ENCODE measurements at regions of chr9 and their contacts with region 1.

Region 1: DNA sequence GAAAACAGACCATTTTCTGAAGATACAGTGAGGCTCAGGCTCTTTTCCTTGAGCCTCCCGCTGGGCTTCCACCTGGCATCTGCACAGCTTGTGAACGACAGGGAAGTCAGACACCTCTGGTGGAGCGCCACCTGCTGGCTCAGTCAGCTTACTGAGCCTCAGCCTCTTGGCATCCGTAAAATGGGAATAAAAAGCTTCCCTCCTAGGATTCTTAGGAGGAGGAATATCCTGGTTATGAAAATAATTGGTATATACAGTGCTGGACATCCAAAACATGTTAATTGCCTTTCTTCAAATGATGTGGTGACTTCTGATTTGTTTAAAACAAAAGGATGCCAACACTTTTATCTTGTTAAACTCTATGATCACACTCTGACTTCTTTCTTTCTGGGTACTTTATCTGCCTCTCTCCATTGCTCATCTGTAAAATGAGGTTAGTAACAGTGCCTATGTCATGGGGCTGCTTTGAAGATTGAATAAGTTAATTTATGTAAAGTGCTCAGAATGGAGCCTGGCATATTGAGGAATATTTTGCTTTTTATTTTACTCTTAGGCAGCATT is 67.5 kb downstream of the MAMDC2 start:
- DNase-seq: peak in 8 of 9 experiments; percentile 9 to 59 (median 48)
- ATAC-seq: no peak
- H3K4me3 ChIP-seq: no peak overlapping the region
- H3K4me3 Mint-ChIP-seq: no peak overlapping the region
- H3K27ac ChIP-seq: no peak overlapping the region
- H3K27ac Mint-ChIP-seq: no peak overlapping the region
- H3K4me1 ChIP-seq: no peaks in the 10 kb centered on the region
- H3K4me1 Mint-ChIP-seq: peaks cover 4% of the 10 kb centered on the region
- H3K27me3 ChIP-seq: no peaks in the 10 kb centered on the region
- H3K27me3 Mint-ChIP-seq: peaks cover 20% of the 10 kb centered on the region
- CTCF ChIP-seq: peak; percentile 81

Region 2: GRCh38 chr9:69421908-69422801 is 689.0 kb before region 1 on chr9:
- CTCF ChIA-PET with region 1: interaction called, 33 read pairs
- POLR2A ChIA-PET with region 1: no interaction called
- intact Hi-C with region 1: loop called in 1 of 2 experiments (anchors 2 kb)
- DNase-seq: peak in 8 of 9 experiments; percentile 6 to 62 (median 40)
- ATAC-seq: no peak
- H3K4me3 ChIP-seq: no peak overlapping the region
- H3K4me3 Mint-ChIP-seq: no peak overlapping the region
- H3K27ac ChIP-seq: no peak overlapping the region
- H3K27ac Mint-ChIP-seq: no peak overlapping the region
- H3K4me1 ChIP-seq: no peaks in the 10 kb centered on the region
- H3K4me1 Mint-ChIP-seq: no peaks in the 10 kb centered on the region
- H3K27me3 ChIP-seq: no peaks in the 10 kb centered on the region
- H3K27me3 Mint-ChIP-seq: peaks cover 18% of the 10 kb centered on the region
- CTCF ChIP-seq: peak; percentile 63

Region 3: GRCh38 chr9:69971643-69972449 is 139.3 kb before region 1 on chr9:
- CTCF ChIA-PET with region 1: interaction called, 3 read pairs
- POLR2A ChIA-PET with region 1: no interaction called
- intact Hi-C with region 1: loop called in 1 of 2 experiments (anchors 5 kb)
- DNase-seq: peak; percentile 1 to 52 (median 38)
- ATAC-seq: no peak
- H3K4me3 ChIP-seq: no peak overlapping the region
- H3K4me3 Mint-ChIP-seq: no peak overlapping the region
- H3K27ac ChIP-seq: no peak overlapping the region
- H3K27ac Mint-ChIP-seq: no peak overlapping the region
- H3K4me1 ChIP-seq: no peaks in the 10 kb centered on the region
- H3K4me1 Mint-ChIP-seq: no peaks in the 10 kb centered on the region
- H3K27me3 ChIP-seq: no peaks in the 10 kb centered on the region
- H3K27me3 Mint-ChIP-seq: peaks cover 20% of the 10 kb centered on the region
- CTCF ChIP-seq: peak; percentile 53

Measured in CD8-positive, alpha-beta T cell (primary cell).